Common myeloid progenitor, CD34-positive (primary cell): ENCODE measurements at regions of chr11 and their contacts with region 1.

Region 1: GRCh38 chr11:65888163-65888814 is at the start of gene FIBP:
- DNase-seq: peak; percentile 96 to 98 (median 97)
- H3K4me3 ChIP-seq: peak within 1 kb of the TSS; percentile 55 to 97 (median 88)
- H3K27ac ChIP-seq: peak within 1 kb of the TSS; percentile 40 to 87
- H3K4me1 ChIP-seq: peaks cover 8 to 66% (median 60%) of the 10 kb centered on the region in 4 experiments
- H3K27me3 ChIP-seq: no peaks in the 10 kb centered on the region

Region 2: GRCh38 chr11:65524741-65525545 is 363.3 kb before region 1 on chr11 and contains the start of gene SCYL1:
- CTCF ChIA-PET with region 1: no interaction called
- POLR2A ChIA-PET with region 1: no interaction called
- DNase-seq: peak in 2 of 3 donors; percentile 75 to 77
- H3K4me3 ChIP-seq: peak within 1 kb of the TSS; percentile 67 to 85 (median 77)
- H3K27ac ChIP-seq: peak within 1 kb of the TSS in 1 of 2 experiments; percentile 79
- H3K4me1 ChIP-seq: peaks cover 10 to 44% (median 38%) of the 10 kb centered on the region in 4 experiments
- H3K27me3 ChIP-seq: no peaks in the 10 kb centered on the region

Region 3: GRCh38 chr11:65703846-65704245 is 184.4 kb before region 1 on chr11:
- CTCF ChIA-PET with region 1: interaction called, 15 read pairs
- POLR2A ChIA-PET with region 1: no interaction called
- DNase-seq: no peak
- H3K4me3 ChIP-seq: no peak overlapping the region
- H3K27ac ChIP-seq: no peak overlapping the region
- H3K4me1 ChIP-seq: peaks cover 0 to 3% (median 1%) of the 10 kb centered on the region in 4 experiments
- H3K27me3 ChIP-seq: no peaks in the 10 kb centered on the region

Region 4: DNA sequence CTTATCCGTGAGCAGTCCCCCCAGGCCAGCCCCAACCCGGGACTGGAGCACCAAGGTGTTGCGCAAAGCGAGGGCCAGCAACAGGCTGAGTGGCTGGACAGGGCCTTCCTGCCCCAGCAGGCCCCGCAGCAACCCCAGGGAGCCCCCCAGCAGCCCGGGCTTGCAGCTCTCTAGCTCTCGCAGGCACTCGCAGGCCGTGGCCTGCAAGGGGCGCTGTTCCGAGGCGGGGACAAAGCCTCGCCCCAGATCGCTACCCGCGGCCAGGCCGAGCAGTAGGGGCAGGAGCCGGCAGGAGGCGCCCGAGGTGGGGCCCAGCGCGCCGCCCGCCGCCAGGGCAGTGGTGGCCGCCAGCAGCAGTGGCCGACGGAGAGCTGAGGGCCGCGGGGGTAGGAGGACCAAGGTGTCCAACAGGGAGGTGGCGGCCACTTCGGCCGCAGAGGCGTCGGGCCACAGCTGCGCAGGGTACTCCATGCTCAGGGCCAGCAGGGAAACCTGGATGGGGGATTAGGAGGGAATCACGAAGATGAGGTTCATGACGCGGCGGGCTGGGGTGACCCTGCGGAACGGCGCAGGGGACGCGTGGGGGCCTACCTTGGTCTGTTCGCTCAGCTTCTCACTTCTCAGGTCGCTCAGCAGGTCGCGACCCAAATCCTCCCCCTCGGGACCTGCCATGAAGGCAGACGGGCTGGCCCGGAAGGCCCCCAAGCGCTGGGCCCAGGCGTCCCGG is 108.3 kb before region 1 on chr11:
- CTCF ChIA-PET with region 1: interaction called, 20 read pairs
- POLR2A ChIA-PET with region 1: no interaction called
- DNase-seq: peak; percentile 81 to 92 (median 91)
- H3K4me3 ChIP-seq: peak overlapping the region; percentile 56 to 85 (median 72)
- H3K27ac ChIP-seq: peak overlapping the region in 1 of 2 experiments; percentile 77
- H3K4me1 ChIP-seq: peaks cover 0 to 37% (median 19%) of the 10 kb centered on the region in 4 experiments
- H3K27me3 ChIP-seq: peaks cover 0 to 33% (median 6%) of the 10 kb centered on the region in 5 experiments

Region 5: DNA sequence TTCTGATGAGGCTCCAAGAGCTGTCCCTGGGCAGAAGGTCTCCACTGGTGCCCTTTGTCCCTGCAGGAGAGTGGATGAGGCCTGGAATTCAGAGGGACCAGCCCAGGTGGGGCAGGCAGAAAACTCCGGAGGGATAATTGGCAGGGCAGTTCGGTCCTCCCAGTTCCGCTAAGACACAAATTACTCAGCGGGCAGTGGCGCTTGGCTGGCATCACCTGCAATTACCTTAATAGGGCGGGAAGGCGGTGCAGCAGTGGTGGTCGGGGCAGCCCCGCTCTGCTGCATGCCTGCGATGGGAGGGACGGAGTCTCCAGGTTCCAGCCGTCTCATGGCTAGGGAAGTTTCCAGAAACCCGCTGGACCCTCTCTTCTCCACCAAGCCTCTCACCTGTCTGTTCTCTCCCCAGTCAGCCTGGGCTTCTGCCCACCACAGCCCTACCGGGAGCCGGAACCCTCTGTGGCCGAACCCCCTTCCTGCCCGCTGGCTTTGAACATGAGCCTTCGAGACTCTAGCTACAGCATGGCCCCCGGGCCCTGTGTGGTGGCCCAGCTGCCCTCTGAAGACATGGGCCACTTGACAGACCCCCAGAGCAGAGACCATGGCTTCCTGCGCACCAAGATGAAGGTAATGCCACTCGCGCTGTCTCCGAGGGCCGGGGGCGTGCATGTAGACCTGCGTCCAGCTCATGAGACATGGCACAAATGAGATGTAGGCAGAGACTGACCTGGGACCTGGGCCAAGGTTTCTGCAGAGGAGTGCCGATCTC is 94.5 kb before region 1 on chr11:
- CTCF ChIA-PET with region 1: no interaction called
- POLR2A ChIA-PET with region 1: no interaction called
- DNase-seq: no peak
- H3K4me3 ChIP-seq: no peak overlapping the region
- H3K27ac ChIP-seq: no peak overlapping the region
- H3K4me1 ChIP-seq: peaks cover 0 to 22% (median 17%) of the 10 kb centered on the region in 4 experiments
- H3K27me3 ChIP-seq: peaks cover 0 to 12% (median 1%) of the 10 kb centered on the region in 5 experiments

Region 6: DNA sequence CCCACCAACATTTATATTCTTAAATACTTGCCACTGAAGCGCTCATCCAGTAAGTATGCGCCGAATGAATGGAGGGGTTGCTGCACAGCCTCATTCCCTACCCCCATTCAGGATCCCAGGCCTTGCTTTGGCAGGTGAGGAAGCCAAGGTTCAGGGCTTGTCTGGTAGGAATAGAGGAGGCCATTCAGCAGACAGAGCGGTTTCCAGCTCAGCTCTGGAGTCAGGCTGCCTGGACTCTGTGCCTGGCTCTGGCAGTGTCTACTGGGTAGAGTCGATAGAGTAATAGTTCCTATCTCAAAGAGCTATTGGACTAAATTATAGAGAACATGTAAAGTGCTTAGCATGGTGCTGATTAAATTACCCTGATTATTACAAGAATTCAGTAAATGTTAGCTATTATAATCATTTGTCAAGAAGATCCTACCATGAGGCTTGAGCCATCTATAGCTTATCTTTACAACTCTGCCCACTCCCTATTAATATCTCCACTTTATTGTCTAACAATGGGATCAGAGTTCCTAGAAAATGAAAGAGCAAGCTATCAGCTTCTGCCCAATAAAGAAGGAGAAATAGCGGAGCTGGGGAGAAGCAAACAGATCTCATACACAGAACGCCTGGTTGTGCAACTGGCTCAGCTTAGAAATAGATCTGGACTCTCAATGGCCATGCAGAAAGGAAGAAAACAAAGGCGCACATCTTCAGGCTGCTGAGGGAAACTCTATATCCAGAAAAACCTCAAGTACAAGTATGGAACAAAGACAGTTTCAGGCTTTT is 61.1 kb before region 1 on chr11:
- CTCF ChIA-PET with region 1: interaction called, 10 read pairs
- POLR2A ChIA-PET with region 1: no interaction called
- DNase-seq: no peak
- H3K4me3 ChIP-seq: no peak overlapping the region
- H3K27ac ChIP-seq: no peak overlapping the region
- H3K4me1 ChIP-seq: no peaks in the 10 kb centered on the region
- H3K27me3 ChIP-seq: no peaks in the 10 kb centered on the region

Region 7: DNA sequence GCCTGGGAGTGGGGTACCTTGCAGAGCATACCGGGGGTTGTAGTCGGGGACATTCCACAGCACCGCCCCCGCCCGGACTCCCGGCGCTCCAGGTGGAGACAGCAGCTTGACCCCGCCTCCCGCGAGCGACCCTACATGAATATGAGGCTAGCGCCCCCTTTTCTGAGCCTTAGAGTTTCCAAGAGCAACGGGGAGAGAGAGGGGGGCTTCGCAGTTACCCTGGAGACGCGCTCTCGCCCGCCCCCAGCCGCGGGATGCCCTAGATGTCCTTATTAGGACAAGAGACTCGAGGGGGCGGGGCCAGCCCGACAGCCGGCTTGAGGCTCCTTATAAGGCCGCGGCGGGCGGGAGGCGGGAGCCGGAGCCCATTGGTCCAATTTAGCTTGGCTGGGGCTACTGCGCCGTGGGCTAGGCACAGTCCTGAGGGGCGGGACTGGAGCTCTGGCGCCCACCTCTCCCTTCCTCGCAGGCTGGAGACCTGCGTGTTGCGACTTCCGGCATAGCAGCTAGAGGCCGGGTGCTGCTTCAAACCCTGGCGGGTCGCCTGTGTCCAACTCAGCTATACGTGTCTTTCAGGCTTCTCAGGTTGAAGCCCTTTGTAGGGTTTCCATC is 29.0 kb before region 1 on chr11:
- CTCF ChIA-PET with region 1: interaction called, 168 read pairs
- POLR2A ChIA-PET with region 1: interaction called, 33 read pairs
- DNase-seq: peak; percentile 97 to 99 (median 99)
- H3K4me3 ChIP-seq: peak overlapping the region; percentile 80 to 96 (median 90)
- H3K27ac ChIP-seq: peak overlapping the region; percentile 68 to 85
- H3K4me1 ChIP-seq: peaks cover 14 to 52% (median 49%) of the 10 kb centered on the region in 4 experiments
- H3K27me3 ChIP-seq: no peaks in the 10 kb centered on the region

Region 8: GRCh38 chr11:65900125-65900898 is 12.0 kb after region 1 on chr11 and contains the start of gene FOSL1:
- CTCF ChIA-PET with region 1: interaction called, 41 read pairs
- POLR2A ChIA-PET with region 1: interaction called, 33 read pairs
- DNase-seq: peak; percentile 95 to 98 (median 98)
- H3K4me3 ChIP-seq: peak within 1 kb of the TSS; percentile 55 to 89 (median 77)
- H3K27ac ChIP-seq: peak within 1 kb of the TSS; percentile 33 to 77
- H3K4me1 ChIP-seq: peaks cover 0 to 48% (median 39%) of the 10 kb centered on the region in 4 experiments
- H3K27me3 ChIP-seq: no peaks in the 10 kb centered on the region

Region 9: GRCh38 chr11:65932558-65932919 is 44.2 kb after region 1 on chr11:
- CTCF ChIA-PET with region 1: interaction called, 34 read pairs
- POLR2A ChIA-PET with region 1: interaction called, 5 read pairs
- DNase-seq: no peak
- H3K4me3 ChIP-seq: no peak overlapping the region
- H3K27ac ChIP-seq: no peak overlapping the region
- H3K4me1 ChIP-seq: peaks cover 7 to 35% (median 33%) of the 10 kb centered on the region in 4 experiments
- H3K27me3 ChIP-seq: no peaks in the 10 kb centered on the region

Region 10: DNA sequence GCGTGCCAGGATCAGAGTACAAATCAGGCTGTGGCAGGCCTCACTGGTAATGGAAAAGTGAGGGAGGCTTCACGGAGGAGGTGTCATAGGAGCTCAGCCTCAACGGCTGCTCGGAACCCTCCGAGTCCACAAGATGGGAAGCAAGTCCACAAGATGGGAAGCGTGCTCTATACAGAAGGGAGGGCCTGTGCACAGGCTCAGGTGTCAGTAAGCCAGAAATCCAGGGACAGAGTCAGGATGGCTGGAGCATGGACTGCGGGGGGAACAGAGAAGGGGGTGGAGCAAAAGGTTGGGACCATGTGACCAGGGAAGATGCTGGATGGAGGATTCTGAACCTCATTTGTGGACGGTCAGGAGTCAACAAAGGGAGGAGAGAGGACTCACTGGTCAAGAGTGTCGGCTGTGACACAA is 588.6 kb after region 1 on chr11:
- CTCF ChIA-PET with region 1: no interaction called
- POLR2A ChIA-PET with region 1: no interaction called
- DNase-seq: no peak
- H3K4me3 ChIP-seq: no peak overlapping the region
- H3K27ac ChIP-seq: no peak overlapping the region
- H3K4me1 ChIP-seq: peaks cover 4 to 18% (median 13%) of the 10 kb centered on the region in 4 experiments
- H3K27me3 ChIP-seq: no peaks in the 10 kb centered on the region